Head of caudate nucleus (tissue), 42 donors: ENCODE measurements at regions of chr1 and their contacts with region 1.

Region 1: GRCh38 chr1:84253891-84254290 is 47.6 kb upstream of the SAMD13 start:
- DNase-seq: peak; percentile 49 to 97 (median 85)

Region 2: GRCh38 chr1:84166797-84167196 is 87.1 kb before region 1 on chr1:
- intact Hi-C with region 1: loop called (anchors 10 kb)
- DNase-seq: no peak

Region 3: DNA sequence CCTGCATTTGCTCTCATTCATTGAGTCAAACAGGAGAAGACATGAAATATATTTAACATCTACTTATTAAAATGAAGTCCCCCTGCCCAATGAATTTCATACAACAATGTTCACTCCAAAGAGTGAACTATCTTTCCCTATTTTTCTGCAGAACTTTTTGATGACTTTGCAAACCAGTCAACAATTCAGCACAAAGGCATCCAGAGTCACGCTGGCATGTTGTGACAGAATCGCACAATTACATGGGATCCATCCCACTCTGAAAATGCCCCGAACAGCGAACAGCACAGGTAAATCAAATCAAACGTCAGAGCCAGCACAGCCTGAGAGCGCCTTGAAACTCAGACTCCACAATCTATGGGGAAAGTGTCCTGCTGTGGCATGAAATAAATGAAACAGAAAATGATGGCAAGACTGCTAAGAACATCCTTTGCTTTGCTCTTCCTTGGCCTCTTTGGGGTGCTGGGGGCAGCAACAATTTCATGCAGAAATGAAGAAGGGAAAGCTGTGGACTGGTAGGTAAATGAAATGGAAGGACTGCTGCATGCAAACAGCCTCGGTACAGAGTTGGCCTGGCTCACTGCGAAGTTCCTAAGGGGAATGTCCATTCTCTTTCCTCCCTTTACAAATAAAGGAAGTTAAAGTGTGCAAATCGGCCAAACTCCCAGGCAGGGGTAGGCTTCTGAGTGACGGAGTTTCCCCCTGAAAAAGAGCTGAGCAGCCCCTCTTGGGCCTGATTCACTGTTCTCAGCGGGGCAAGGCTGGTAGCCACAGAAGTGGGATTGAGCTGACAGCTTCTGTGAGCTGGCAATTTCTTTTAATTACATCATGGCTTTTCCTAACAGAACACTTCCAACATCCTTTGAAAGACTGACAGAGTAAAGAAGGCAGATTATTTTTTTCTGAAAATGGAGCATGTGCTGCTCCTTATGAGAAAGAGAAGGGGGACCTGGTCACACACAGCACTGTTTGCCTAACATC is 144.6 kb after region 1 on chr1 and contains the start of gene DNASE2B:
- intact Hi-C with region 1: no loop called
- DNase-seq: no peak